PC-9 (cell line): ENCODE measurements at regions of chr11 and their contacts with region 1.

Region 1: DNA sequence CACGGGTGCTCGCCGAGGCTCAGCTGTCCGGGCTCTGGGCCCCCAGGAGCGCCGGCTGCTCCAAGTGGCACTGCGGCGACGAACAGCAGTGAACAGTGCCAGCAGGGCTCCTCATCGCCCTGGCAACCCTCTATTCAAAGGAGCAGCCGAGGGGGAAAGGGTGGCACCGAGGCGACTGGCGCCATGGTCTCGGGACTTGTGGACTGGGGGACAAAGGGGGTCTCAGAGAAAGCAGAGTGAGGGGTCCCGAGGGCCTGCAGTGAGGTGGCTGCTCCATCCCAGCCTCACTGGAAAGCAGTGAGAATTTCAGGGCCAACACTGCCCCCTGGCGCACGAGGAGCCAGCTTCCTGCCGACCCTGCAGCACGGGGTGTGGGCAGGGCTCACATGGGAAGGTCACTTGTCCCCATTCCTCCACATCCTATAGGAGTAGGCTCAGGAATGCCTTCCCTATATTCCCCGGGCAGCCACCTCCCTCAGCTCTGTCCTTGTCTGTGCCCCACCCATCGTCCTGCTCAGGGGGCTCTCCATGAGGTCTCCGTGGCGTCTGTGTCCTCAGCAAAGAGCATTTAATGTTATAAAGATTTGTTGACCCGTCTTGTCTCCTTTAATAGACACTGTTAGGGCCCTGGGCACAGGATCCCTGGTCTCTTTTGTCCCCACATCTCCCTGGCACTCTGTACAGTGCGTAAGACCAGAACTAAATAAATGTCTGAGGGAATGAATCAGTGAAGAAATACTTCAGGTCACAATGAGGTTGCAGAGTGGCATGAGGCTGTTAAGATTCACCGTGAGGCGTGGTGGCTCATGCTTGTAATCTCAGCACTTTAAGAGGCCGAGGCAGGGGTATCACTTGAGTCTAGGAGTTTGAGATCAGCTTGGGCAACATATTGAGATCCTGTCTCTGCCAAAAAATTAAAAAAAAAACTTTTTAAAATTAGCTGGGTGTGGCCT is 26.4 kb downstream of the LRFN4 start:
- DNase-seq: peak; percentile 85 to 89
- H3K4me3 ChIP-seq: peak overlapping the region; percentile 2; the same call in 1 of the 2 replicates
- H3K27ac ChIP-seq: peak overlapping the region; percentile 78
- H3K4me1 ChIP-seq: peaks cover 49% of the 10 kb centered on the region
- H3K27me3 ChIP-seq: no peaks in the 10 kb centered on the region
- CTCF ChIP-seq: peak; percentile 86

Region 2: GRCh38 chr11:66728693-66729385 is 154.5 kb before region 1 on chr11 and contains the start of gene SPTBN2:
- CTCF ChIA-PET with region 1: no interaction called
- POLR2A ChIA-PET with region 1: no interaction called
- intact Hi-C with region 1: no loop called
- DNase-seq: no peak
- H3K4me3 ChIP-seq: peak within 1 kb of the TSS; percentile 46; the same call in 1 of the 2 replicates
- H3K27ac ChIP-seq: no peak within 1 kb of the TSS
- H3K4me1 ChIP-seq: peaks cover 9% of the 10 kb centered on the region
- H3K27me3 ChIP-seq: peaks cover 6% of the 10 kb centered on the region; the same call in 1 of the 2 replicates
- CTCF ChIP-seq: no peak
- total RNA-seq, gene SPTBN2: 51.0 and 66.8 TPM in 2 replicates

Region 3: GRCh38 chr11:66784575-66784974 is 98.7 kb before region 1 on chr11:
- CTCF ChIA-PET with region 1: no interaction called
- POLR2A ChIA-PET with region 1: no interaction called
- intact Hi-C with region 1: no loop called
- DNase-seq: no peak
- H3K4me3 ChIP-seq: no peak overlapping the region
- H3K27ac ChIP-seq: no peak overlapping the region
- H3K4me1 ChIP-seq: peaks cover 19% of the 10 kb centered on the region
- H3K27me3 ChIP-seq: no peaks in the 10 kb centered on the region
- CTCF ChIP-seq: no peak

Region 4: DNA sequence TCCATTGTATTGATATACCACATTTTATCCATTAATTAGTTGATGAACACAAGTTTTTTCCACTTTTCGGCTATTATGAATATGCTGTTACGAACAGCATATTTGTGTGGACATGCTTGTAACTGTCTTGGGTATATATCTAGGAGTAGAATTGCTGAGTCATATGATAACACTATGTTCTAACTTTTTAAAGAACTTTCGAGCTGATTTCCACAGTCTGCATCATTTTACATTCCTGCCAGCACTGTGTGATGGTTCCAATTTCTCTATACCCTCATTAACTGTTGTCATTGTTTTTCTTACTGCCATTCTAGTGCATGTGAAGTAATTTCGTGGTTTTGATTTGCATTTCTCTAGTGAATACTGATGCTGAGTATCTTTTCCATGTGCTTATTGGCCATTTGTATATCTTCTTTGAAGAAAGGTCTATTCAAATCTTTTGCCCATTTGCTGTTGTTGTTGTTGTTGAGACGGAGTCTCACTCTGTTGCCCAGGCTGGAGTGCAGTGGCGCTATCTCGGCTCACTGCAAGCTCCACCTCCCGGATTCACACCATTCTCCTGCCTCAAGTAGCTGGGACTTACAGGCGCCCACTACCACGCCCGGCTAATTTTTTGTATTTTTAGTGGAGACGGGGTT is 47.4 kb before region 1 on chr11:
- CTCF ChIA-PET with region 1: no interaction called
- POLR2A ChIA-PET with region 1: no interaction called
- intact Hi-C with region 1: loop called (anchors 1 kb)
- DNase-seq: no peak
- H3K4me3 ChIP-seq: no peak overlapping the region
- H3K27ac ChIP-seq: no peak overlapping the region
- H3K4me1 ChIP-seq: peaks cover 9% of the 10 kb centered on the region
- H3K27me3 ChIP-seq: no peaks in the 10 kb centered on the region
- CTCF ChIP-seq: no peak

Region 5: DNA sequence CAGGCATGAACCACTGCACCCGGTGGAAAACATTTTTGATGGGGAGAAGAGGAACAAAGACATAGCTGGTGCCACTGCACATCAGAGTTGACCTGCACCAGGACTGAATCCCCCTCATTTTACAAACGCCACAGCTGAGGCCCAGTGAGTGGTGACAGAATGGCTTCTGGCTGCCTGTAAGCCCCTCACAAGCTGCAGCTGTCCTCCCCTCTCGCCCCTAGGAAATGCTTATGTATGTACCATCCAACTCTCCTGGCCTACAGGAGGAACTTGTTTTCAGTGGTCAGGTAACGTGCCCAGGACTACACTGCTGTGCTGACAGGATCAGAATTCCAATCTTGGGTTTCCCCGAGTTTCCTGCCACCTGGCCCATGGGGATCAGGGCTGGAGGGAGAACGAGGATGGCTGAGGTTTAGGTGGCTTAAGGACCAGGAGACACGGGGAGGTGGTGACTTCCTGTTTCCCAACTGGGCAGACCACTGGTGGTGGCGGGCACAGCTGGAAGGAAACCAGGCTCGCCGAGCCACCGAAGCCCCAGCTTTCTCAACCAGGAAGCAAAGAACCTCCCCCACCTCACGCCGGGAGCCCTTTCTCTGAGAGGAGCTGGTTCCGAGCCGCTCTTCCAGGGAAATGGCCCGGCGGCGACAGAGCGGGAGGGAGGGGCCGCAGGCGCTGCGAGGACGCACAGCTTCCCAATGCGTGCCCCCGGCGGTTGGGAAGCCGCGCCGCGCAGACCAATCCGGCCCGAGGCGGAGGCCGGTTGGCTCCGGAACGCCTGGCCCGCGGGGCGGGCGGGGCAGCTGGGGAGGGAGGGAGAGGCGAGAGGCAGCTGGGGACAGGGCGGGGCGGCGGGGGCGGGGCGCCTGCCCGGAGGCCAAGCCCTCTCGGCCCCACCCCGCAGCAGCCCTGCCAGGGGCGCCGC is 27.5 kb before region 1 on chr11:
- CTCF ChIA-PET with region 1: interaction called, 3 read pairs
- POLR2A ChIA-PET with region 1: interaction called, 4 read pairs
- intact Hi-C with region 1: loop called (anchors 1 kb)
- DNase-seq: peak; percentile 80 to 98
- H3K4me3 ChIP-seq: peak overlapping the region; percentile 99
- H3K27ac ChIP-seq: peak overlapping the region; percentile 33
- H3K4me1 ChIP-seq: peaks cover 13% of the 10 kb centered on the region
- H3K27me3 ChIP-seq: no peaks in the 10 kb centered on the region
- CTCF ChIP-seq: no peak

Region 6: GRCh38 chr11:66950113-66950535 is 66.8 kb after region 1 on chr11:
- CTCF ChIA-PET with region 1: interaction called, 4 read pairs
- POLR2A ChIA-PET with region 1: no interaction called
- intact Hi-C with region 1: loop called (anchors 2 kb)
- DNase-seq: peak; percentile 94 to 99
- H3K4me3 ChIP-seq: no peak overlapping the region
- H3K27ac ChIP-seq: peak overlapping the region; percentile 72
- H3K4me1 ChIP-seq: peaks cover 18% of the 10 kb centered on the region
- H3K27me3 ChIP-seq: no peaks in the 10 kb centered on the region
- CTCF ChIP-seq: no peak

Region 7: GRCh38 chr11:67022328-67022927 is 139.1 kb after region 1 on chr11:
- CTCF ChIA-PET with region 1: interaction called, 3 read pairs
- POLR2A ChIA-PET with region 1: interaction called, 20 read pairs
- intact Hi-C with region 1: loop called (anchors 2 kb)
- DNase-seq: peak; percentile 86 to 95
- H3K4me3 ChIP-seq: peak overlapping the region; percentile 80
- H3K27ac ChIP-seq: peak overlapping the region; percentile 50
- H3K4me1 ChIP-seq: peaks cover 44% of the 10 kb centered on the region
- H3K27me3 ChIP-seq: no peaks in the 10 kb centered on the region
- CTCF ChIP-seq: no peak